Ovary (tissue), 10 donors: ENCODE measurements at regions of chr15 and their contacts with region 1.

Region 1: GRCh38 chr15:56491110-56491722 is 26.3 kb upstream of the MNS1 start:
- DNase-seq: peak; percentile 57 to 72 (median 68)
- H3K4me3 ChIP-seq: no peak overlapping the region
- H3K27ac ChIP-seq: no peak overlapping the region
- H3K4me1 ChIP-seq: no peaks in the 10 kb centered on the region
- H3K27me3 ChIP-seq: no peaks in the 10 kb centered on the region
- CTCF ChIP-seq: peak; percentile 18 to 48 (median 42)
- EP300 ChIP-seq: no peak
- POLR2A ChIP-seq: no peak

Region 2: GRCh38 chr15:56835718-56836171 is 344.5 kb after region 1 on chr15:
- intact Hi-C with region 1: no loop called
- DNase-seq: peak in 2 of 5 donors; percentile 32 to 36
- H3K4me3 ChIP-seq: no peak overlapping the region
- H3K27ac ChIP-seq: no peak overlapping the region
- H3K4me1 ChIP-seq: peaks cover 5% of the 10 kb centered on the region
- H3K27me3 ChIP-seq: no peaks in the 10 kb centered on the region
- CTCF ChIP-seq: no peak
- EP300 ChIP-seq: no peak
- POLR2A ChIP-seq: no peak

Region 3: DNA sequence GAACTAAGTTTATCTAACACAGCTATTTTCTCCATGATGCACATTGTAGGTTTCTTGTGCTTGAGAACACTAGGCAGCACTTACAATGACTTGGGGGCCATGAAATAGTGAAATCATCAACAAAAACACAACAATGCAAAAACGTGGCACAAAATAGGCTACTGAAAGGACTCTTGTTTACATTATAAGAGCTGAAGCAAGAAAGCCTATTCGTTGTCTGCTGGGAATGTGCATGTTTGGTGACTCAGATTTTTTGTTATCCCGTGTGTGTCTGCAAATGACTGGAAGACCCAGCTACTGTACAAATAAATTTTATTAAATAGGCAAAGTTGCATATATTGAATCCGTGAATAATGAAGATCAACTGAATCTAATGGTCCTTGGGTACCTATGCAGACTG is 512.2 kb after region 1 on chr15:
- intact Hi-C with region 1: no loop called
- DNase-seq: no peak
- H3K4me3 ChIP-seq: no peak overlapping the region
- H3K27ac ChIP-seq: no peak overlapping the region
- H3K4me1 ChIP-seq: peaks cover 2% of the 10 kb centered on the region
- H3K27me3 ChIP-seq: no peaks in the 10 kb centered on the region
- CTCF ChIP-seq: no peak
- EP300 ChIP-seq: no peak
- POLR2A ChIP-seq: no peak

Region 4: DNA sequence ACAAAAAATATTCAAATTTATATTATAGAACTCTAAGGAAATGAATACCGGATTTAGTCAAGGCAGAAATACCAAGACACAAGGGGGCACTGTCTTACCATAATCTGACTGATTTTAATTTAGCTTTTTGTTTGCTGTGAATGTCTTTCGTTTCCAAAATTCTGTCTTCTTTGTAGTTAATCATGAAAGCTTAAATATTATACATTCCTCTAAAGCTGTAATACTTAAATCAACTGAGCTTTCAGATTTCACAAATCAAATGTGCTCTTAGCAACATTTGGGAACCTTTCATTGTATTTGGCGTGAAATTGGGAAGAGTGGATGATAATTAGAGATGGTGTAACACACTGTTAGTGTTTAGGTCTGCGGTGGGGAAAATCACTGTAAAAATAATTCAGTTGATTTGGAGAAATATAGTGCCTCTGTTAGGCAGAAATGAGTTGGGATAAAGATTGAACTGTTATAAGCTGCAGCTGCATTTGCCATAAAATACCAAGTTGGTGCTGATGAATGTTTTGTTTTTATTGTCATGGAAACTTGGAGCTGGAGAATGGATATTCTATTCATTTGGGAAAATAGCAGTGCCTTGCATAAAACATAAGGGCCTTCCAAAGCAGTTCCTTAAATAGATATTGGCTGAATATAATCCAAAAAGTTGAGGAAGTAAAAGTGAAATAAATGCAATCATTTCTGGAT is 655.4 kb after region 1 on chr15:
- intact Hi-C with region 1: loop called in 1 of 4 experiments (anchors 10 kb)
- DNase-seq: no peak
- H3K4me3 ChIP-seq: no peak overlapping the region
- H3K27ac ChIP-seq: no peak overlapping the region
- H3K4me1 ChIP-seq: peaks cover 3% of the 10 kb centered on the region
- H3K27me3 ChIP-seq: no peaks in the 10 kb centered on the region
- CTCF ChIP-seq: peak; percentile 29 to 68 (median 55)
- EP300 ChIP-seq: no peak
- POLR2A ChIP-seq: no peak

Region 5: GRCh38 chr15:57306161-57306943 is 815.1 kb after region 1 on chr15:
- intact Hi-C with region 1: loop called in 2 of 4 experiments (anchors 5 to 10 kb)
- DNase-seq: peak; percentile 73 to 90 (median 85)
- H3K4me3 ChIP-seq: peak overlapping the region; percentile 39
- H3K27ac ChIP-seq: peak overlapping the region in 1 of 2 donors; percentile 5
- H3K4me1 ChIP-seq: peaks cover 1% of the 10 kb centered on the region
- H3K27me3 ChIP-seq: no peaks in the 10 kb centered on the region
- CTCF ChIP-seq: peak; percentile 60 to 76 (median 63)
- EP300 ChIP-seq: no peak
- POLR2A ChIP-seq: no peak

Region 6: DNA sequence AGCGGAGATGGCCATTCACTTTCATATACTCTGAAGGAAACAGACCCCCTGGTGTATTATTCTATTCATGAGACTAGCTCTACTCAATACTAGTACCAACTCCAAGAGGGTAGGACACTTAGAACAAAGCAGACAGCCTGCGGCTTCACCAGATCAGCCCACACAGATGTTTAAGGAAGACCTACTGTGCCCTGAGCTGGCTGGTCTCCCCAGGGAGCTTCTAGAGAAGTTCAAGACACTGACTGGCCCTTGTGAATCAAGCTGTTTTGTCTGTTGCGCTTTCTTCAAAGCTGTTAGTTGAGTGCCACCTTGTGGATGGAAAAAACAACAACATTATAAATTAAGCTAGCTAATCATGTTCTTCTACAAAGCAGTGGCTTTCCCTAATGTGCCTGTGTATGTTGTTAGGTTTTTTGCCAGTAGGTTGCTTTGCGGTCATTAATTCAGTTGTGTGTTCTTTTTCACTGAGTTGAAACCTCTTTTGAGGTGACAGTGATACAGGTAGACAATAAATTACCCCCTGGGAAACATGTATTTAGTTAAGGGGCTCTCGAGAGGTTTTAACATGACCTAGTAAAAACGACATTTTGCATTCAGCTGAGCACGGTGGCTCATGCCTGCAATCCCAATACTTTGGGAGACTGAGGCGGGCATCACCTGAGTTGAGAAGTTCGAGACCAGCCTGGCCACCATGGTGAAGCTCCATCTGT is 1036.3 kb after region 1 on chr15:
- intact Hi-C with region 1: loop called in 2 of 4 experiments (anchors 5 to 10 kb)
- DNase-seq: peak in 4 of 5 donors; percentile 45 to 64 (median 58)
- H3K4me3 ChIP-seq: no peak overlapping the region
- H3K27ac ChIP-seq: no peak overlapping the region
- H3K4me1 ChIP-seq: peaks cover 4% of the 10 kb centered on the region
- H3K27me3 ChIP-seq: no peaks in the 10 kb centered on the region
- CTCF ChIP-seq: peak; percentile 66 to 78 (median 74)
- EP300 ChIP-seq: no peak
- POLR2A ChIP-seq: no peak